ENCODE measurements at regions of chr19 and their contacts with region 1.

Region 1: GRCh38 chr19:12721656-12722565 is 1.8 kb downstream of the TNPO2 start:
- DNase-seq: peak; percentile 86
- H3K4me3 ChIP-seq: peak overlapping the region; percentile 94
- H3K27ac ChIP-seq: peak overlapping the region; percentile 98
- H3K4me1 ChIP-seq: peaks cover 5% of the 10 kb centered on the region
- H3K27me3 ChIP-seq: no peaks in the 10 kb centered on the region
- CTCF ChIP-seq: no peak

Region 2: GRCh38 chr19:12757544-12758274 is 35.8 kb after region 1 on chr19:
- CTCF ChIA-PET with region 1: interaction called, 4 read pairs
- POLR2A ChIA-PET with region 1: interaction called, 24 read pairs
- intact Hi-C with region 1: no loop called
- DNase-seq: peak; percentile 83
- H3K4me3 ChIP-seq: peak overlapping the region; percentile 36
- H3K27ac ChIP-seq: no peak overlapping the region
- H3K4me1 ChIP-seq: no peaks in the 10 kb centered on the region
- H3K27me3 ChIP-seq: no peaks in the 10 kb centered on the region
- CTCF ChIP-seq: peak; percentile 95

Region 3: GRCh38 chr19:12789904-12790619 is 68.2 kb after region 1 on chr19:
- CTCF ChIA-PET with region 1: no interaction called
- POLR2A ChIA-PET with region 1: no interaction called
- intact Hi-C with region 1: no loop called
- DNase-seq: peak; percentile 99
- H3K4me3 ChIP-seq: peak overlapping the region; percentile 59
- H3K27ac ChIP-seq: peak overlapping the region; percentile 98
- H3K4me1 ChIP-seq: peaks cover 34% of the 10 kb centered on the region
- H3K27me3 ChIP-seq: no peaks in the 10 kb centered on the region
- CTCF ChIP-seq: no peak

Region 4: GRCh38 chr19:13022859-13023636 is 301.1 kb after region 1 on chr19:
- CTCF ChIA-PET with region 1: no interaction called
- POLR2A ChIA-PET with region 1: interaction called, 15 read pairs
- intact Hi-C with region 1: no loop called
- DNase-seq: peak; percentile 94
- H3K4me3 ChIP-seq: peak overlapping the region; percentile 51
- H3K27ac ChIP-seq: peak overlapping the region; percentile 84
- H3K4me1 ChIP-seq: peaks cover 51% of the 10 kb centered on the region
- H3K27me3 ChIP-seq: no peaks in the 10 kb centered on the region
- CTCF ChIP-seq: no peak